ENCODE measurements at regions of chr2 and their contacts with region 1.

Region 1: DNA sequence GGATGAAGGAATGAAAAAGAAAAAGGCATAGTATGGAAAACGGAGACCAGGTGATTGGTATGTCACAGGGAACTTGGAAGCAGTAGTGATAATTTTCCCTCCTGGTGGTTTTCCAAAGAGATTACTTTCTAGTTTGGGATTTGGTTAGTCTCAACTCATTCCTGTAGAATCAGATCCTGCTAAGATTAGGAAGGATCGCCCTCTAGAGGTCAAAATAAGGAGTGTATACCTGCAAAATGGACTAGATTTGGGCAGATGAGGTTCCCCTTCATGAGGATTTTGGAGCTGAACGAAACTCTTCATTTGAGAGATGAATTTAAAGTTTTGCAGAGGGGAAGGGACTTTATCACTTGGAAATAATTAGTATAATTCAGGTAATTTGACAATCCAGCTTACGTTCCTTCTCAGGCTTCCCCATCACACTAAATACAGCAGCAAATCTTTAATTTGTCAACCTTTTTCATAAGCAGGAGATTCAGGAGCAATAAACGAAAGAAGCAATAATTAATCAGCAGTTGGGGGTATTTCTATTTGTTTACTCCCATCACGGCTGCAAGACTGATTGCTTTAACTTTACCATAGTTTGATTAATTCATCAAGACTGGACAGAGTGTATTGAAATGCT is 65.2 kb downstream of the CCDC195 start:
- DNase-seq: no peak
- ATAC-seq: peak; percentile 71

Region 2: GRCh38 chr2:224561234-224562005 is 89.5 kb before region 1 on chr2:
- intact Hi-C with region 1: no loop called
- DNase-seq: no peak
- ATAC-seq: no peak

Region 3: DNA sequence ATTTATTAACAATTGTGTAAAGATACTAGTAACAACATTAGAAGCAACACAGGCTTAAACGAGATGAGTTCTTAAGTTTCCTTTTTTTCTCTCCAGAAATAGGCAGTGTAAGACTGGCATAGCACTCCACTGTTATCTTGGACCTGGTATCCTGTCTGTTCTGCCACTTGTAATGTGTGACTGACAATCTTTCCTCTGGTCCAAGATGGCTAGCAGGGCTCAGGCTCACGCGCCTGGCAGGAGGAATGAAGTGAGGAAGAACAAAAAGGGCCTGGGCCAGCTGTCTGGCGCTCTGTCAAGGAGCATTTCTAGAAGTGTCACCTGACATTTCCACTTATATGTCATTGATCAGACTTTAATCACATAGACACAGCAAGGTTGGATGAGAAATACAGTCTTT is 96.8 kb after region 1 on chr2:
- intact Hi-C with region 1: no loop called
- DNase-seq: peak; percentile 45
- ATAC-seq: peak; percentile 55

Region 4: DNA sequence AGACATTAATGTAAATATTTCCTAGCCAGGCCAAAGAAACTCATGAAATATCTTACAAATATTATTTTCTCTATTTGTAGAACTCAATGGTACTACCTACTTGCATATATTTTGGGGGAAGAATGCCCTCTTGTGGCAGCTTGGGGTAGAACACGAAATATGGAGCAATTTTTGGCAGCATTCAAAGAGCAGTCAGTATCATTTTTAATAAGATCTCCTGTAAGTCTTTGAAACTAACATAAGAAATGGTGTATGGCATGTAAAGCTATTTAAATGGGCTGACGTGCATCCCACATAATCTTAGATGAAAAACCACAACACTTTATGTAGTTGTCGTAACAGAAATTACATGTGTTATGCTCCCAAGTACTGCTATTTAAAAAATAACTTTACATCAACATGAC is 127.5 kb after region 1 on chr2:
- intact Hi-C with region 1: loop called (anchors 10 kb)
- DNase-seq: no peak
- ATAC-seq: no peak

Measured in Right ventricle myocardium superior (tissue), 1 donor.